Left colon (tissue), 2 donors: ENCODE measurements at regions of chr10 and their contacts with region 1.

Region 1: DNA sequence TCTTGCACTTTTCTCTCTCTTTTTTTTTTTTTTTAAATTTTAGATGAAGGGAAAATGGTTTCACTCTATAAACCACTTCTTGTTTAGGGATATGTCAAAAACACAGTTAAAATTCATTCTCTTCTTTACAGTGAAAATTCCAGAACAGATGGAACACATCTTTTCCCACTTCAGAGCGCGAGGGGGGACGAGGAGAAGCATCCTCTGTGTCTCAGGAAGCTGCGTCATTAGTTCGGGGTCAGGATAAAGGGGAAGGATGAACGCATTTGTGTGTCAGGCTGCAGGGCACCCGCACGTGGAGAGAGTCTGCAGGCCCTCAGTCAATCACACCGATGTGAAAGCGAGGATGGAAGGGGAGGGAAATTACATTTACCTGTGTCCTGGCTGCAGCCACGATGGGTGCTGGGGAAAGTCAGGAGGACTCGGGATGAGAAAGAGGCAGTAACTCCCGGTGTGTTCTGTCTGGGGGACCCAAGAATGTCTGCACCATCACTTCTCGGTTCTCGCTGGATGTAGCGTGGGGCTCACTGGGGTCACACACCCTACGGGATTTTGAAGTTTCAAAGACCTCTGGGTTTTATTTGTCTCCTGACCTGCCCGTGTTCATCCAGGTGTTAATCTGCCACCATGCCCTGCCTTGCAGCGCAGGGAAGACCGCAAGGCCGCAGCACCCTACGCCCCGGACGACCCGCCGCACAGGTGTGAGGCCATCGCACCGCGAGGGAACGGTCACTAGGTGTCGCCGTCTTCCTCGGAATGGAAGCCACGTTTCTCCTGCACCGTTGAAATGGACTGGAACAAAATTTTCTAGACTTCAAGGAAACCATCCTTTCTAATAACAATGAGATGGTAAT is 66.7 kb upstream of the PITRM1 start:
- DNase-seq: peak; percentile 47 to 81
- ATAC-seq: peak; percentile 93

Region 2: GRCh38 chr10:3339531-3339950 is 100.2 kb after region 1 on chr10:
- intact Hi-C with region 1: no loop called
- DNase-seq: no peak
- ATAC-seq: no peak

Region 3: GRCh38 chr10:4656576-4657182 is 1417.4 kb after region 1 on chr10:
- intact Hi-C with region 1: loop called (anchors 10 kb)
- DNase-seq: peak in 1 of 2 donors; percentile 51
- ATAC-seq: peak; percentile 77